GM10248 (cell line): ENCODE measurements at regions of chr10 and their contacts with region 1.

Region 1: DNA sequence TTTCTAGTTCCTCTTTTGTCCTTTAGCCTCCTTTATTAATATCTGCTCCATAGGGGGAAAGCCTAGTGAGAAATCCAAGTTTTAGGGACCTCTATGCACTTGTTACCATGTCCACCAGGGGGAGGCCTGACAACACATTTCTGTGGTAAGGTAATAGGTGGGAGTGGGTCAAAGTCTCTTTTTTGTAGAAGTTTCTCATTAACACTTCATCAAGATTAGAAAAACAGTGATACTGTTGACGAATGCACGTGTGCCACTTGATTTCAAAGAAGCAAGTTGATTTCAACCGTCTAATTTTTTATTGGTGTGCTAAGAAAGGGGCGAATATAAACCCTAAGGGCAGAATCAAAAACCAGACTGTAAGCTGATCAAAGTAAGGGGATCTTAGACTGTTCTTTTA is 30.6 kb downstream of the CISD1 start:
- DNase-seq: peak; percentile 66
- CTCF ChIP-seq: peak; percentile 88

Region 2: GRCh38 chr10:58177362-58177947 is 122.1 kb before region 1 on chr10:
- CTCF ChIA-PET with region 1: interaction called, 149 read pairs
- POLR2A ChIA-PET with region 1: no interaction called
- DNase-seq: peak; percentile 24
- CTCF ChIP-seq: peak; percentile 51

Region 3: GRCh38 chr10:58275908-58276307 is 23.7 kb before region 1 on chr10:
- CTCF ChIA-PET with region 1: interaction called, 11 read pairs
- POLR2A ChIA-PET with region 1: no interaction called
- DNase-seq: no peak
- CTCF ChIP-seq: no peak

Region 4: GRCh38 chr10:58311026-58311425 is 11.4 kb after region 1 on chr10:
- CTCF ChIA-PET with region 1: interaction called, 22 read pairs
- POLR2A ChIA-PET with region 1: no interaction called
- DNase-seq: no peak
- CTCF ChIP-seq: no peak

Region 5: GRCh38 chr10:58316874-58317273 is 17.3 kb after region 1 on chr10:
- CTCF ChIA-PET with region 1: interaction called, 22 read pairs
- POLR2A ChIA-PET with region 1: no interaction called
- DNase-seq: no peak
- CTCF ChIP-seq: no peak

Region 6: DNA sequence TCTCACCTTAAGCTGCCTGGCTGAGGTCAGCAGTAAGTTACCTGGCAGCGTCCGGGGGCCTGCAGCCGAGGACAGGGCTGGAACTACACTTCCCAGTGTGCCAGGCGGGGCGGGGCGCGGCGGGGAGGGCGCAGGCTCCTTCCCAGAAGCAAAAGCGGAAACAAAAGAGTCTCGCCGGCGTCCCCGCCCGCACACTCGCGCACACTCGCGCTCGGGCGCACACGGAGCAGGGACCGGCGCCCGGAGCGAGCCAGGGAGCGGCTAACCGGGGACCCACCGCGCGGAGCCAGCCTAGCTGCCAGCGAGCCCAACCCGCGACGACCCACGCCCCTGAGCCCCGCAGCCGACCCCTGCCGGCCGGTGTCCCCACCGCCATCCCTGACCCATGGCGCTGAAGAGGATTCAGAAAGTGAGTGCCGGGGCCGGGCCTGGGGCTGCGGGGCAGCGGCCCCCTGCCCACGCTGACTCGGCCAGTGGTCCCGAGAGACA is 35.3 kb after region 1 on chr10 and contains the start of gene UBE2D1:
- CTCF ChIA-PET with region 1: interaction called, 12 read pairs
- POLR2A ChIA-PET with region 1: interaction called, 3 read pairs
- DNase-seq: peak; percentile 90
- CTCF ChIP-seq: no peak

Region 7: DNA sequence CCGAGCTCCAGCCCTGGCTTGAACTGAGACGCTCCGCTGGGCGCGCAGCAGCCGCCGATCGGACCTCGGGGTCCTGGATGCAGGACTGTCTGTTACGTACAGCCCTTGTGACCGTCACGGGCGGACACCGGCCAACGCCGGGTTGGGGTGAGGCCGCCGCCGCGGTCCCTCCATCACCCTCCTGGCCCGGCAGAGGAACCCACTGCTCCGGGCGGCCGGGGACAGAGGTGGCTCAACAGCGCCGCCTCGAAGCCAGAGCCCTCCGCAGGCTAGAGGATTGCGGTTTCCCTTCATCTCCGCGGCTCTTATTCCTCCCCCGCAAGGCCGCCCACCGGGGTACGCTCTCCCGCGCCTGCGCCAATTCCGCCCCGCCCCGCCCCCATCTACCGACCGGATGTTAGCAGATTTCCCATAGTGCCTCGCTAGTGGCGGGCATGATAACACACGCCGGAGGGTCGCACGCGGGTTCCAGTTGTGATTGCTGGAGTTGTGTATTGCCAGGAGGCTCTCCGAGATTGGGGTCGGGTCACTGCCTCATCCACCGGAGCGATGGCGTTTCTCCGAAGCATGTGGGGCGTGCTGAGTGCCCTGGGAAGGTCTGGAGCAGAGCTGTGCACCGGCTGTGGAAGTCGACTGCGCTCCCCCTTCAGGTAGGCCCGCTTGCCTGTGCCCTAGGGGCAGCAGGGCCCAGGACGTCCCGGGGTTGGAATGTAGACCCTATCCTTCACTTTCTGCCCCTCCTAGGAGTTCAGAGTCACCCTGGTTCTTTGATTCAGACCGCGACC is 85.6 kb after region 1 on chr10 and contains the start of gene TFAM:
- CTCF ChIA-PET with region 1: interaction called, 60 read pairs
- POLR2A ChIA-PET with region 1: no interaction called
- DNase-seq: peak; percentile 94
- CTCF ChIP-seq: peak; percentile 53